Naive thymus-derived CD4-positive, alpha-beta T cell (primary cell): ENCODE measurements at regions of chr21 and their contacts with region 1.

Region 1: DNA sequence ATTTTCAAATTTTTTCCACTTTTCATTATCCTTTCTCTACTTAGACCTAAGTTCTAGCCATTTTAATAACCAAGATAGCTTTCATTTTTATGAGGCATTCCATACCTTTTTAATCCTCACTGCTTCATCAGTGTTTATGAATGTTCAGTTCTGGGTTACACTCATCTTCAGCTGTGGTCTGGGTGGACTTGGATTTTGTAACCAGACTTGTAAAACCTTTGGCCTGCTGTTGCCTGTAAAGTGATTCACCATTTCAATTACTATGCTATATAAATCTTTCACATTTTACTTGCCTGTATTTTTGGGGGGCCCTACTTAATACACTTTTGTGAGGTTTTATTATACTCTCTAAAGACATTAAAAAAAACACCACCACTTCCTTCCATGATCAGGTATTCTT is 46.2 kb downstream of the USP25 start:
- DNase-seq: no peak
- ATAC-seq: no peak
- H3K4me3 ChIP-seq: no peak overlapping the region
- H3K4me3 Mint-ChIP-seq: no peak overlapping the region
- H3K27ac ChIP-seq: no peak overlapping the region
- H3K27ac Mint-ChIP-seq: peak overlapping the region in 1 of 9 donors; percentile 51
- H3K4me1 ChIP-seq: peaks cover 0 to 4% of the 10 kb centered on the region in 2 donors
- H3K4me1 Mint-ChIP-seq: peaks cover 20 to 60% (median 40%) of the 10 kb centered on the region in 7 donors
- H3K27me3 ChIP-seq: no peaks in the 10 kb centered on the region
- H3K27me3 Mint-ChIP-seq: no peaks in the 10 kb centered on the region

Region 2: GRCh38 chr21:15761507-15762100 is 14.4 kb before region 1 on chr21:
- CTCF ChIA-PET with region 1: no interaction called
- POLR2A ChIA-PET with region 1: no interaction called
- intact Hi-C with region 1: loop called (anchors 2 kb)
- DNase-seq: no peak
- ATAC-seq: no peak
- H3K4me3 ChIP-seq: no peak overlapping the region
- H3K4me3 Mint-ChIP-seq: peak overlapping the region in 7 of 10 donors; percentile 2 to 69 (median 30)
- H3K27ac ChIP-seq: no peak overlapping the region
- H3K27ac Mint-ChIP-seq: peak overlapping the region in 4 of 9 donors; percentile 3 to 49 (median 30)
- H3K4me1 ChIP-seq: peaks cover 3 to 14% of the 10 kb centered on the region in 2 donors
- H3K4me1 Mint-ChIP-seq: peaks cover 25 to 92% (median 79%) of the 10 kb centered on the region in 7 donors
- H3K27me3 ChIP-seq: no peaks in the 10 kb centered on the region
- H3K27me3 Mint-ChIP-seq: no peaks in the 10 kb centered on the region

Region 3: GRCh38 chr21:15797577-15798363 is 21.8 kb after region 1 on chr21:
- CTCF ChIA-PET with region 1: no interaction called
- POLR2A ChIA-PET with region 1: interaction called, 3 read pairs
- intact Hi-C with region 1: loop called in 1 of 2 experiments (anchors 2 kb)
- DNase-seq: no peak
- ATAC-seq: no peak
- H3K4me3 ChIP-seq: no peak overlapping the region
- H3K4me3 Mint-ChIP-seq: no peak overlapping the region
- H3K27ac ChIP-seq: no peak overlapping the region
- H3K27ac Mint-ChIP-seq: peak overlapping the region in 6 of 9 donors; percentile 1 to 66 (median 32)
- H3K4me1 ChIP-seq: peaks cover 0 to 12% of the 10 kb centered on the region in 2 donors
- H3K4me1 Mint-ChIP-seq: peaks cover 31 to 90% (median 61%) of the 10 kb centered on the region in 7 donors
- H3K27me3 ChIP-seq: no peaks in the 10 kb centered on the region
- H3K27me3 Mint-ChIP-seq: no peaks in the 10 kb centered on the region

Region 4: DNA sequence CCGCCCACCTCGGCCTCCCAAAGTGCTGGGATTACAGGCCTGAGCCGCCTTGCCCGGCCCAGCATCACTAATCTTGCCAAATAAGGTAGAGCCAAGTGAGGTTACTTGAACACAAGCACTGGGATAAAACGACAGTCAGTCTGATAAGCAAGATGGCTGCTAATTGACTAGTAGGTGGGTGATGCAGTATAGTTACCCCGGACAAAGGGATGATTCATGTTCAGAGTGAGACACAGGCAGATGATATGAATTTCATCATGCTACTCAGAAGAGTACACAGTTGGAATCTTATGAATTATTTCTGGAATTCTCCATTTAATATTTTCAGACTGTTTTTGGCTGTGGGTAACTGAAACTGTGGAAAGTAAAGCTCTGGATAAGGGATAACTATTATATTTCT is 132.2 kb after region 1 on chr21:
- CTCF ChIA-PET with region 1: no interaction called
- POLR2A ChIA-PET with region 1: no interaction called
- intact Hi-C with region 1: no loop called
- DNase-seq: no peak
- ATAC-seq: no peak
- H3K4me3 ChIP-seq: no peak overlapping the region
- H3K4me3 Mint-ChIP-seq: no peak overlapping the region
- H3K27ac ChIP-seq: no peak overlapping the region
- H3K27ac Mint-ChIP-seq: no peak overlapping the region
- H3K4me1 ChIP-seq: no peaks in the 10 kb centered on the region
- H3K4me1 Mint-ChIP-seq: no peaks in the 10 kb centered on the region
- H3K27me3 ChIP-seq: no peaks in the 10 kb centered on the region
- H3K27me3 Mint-ChIP-seq: no peaks in the 10 kb centered on the region